Naive thymus-derived CD4-positive, alpha-beta T cell (primary cell): ENCODE measurements at regions of chr18 and their contacts with region 1.

Region 1: DNA sequence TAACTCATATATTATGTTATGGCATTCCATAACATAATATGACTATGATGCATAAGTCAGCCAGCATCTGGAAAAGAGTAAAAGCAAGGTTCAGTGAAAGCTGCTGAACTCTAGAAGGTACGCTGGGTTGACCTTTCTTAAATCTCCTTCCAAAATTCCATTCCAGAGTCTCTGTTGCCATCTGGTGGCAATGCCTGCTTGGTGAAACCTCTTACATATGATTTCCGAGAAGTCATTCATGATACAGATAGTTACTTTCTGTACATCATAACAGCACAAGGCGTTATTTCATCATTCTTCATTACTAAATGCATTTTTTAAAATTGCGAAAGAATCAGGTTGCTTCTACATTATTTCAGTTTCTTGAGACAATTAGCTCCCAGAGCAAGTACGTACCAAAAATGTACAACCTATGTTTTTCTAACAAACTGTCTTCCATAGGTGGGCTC is 7.0 kb upstream of the EPG5 start:
- DNase-seq: peak in 8 of 9 donors; percentile 36 to 68 (median 60)
- ATAC-seq: peak; percentile 94
- H3K4me3 ChIP-seq: no peak overlapping the region
- H3K4me3 Mint-ChIP-seq: peak overlapping the region in 4 of 10 donors; percentile 3 to 35 (median 12)
- H3K27ac ChIP-seq: no peak overlapping the region
- H3K27ac Mint-ChIP-seq: peak overlapping the region in 3 of 9 donors; percentile 13 to 77 (median 56)
- H3K4me1 ChIP-seq: peaks cover 0 to 6% of the 10 kb centered on the region in 2 donors
- H3K4me1 Mint-ChIP-seq: peaks cover 0 to 9% (median 7%) of the 10 kb centered on the region in 7 donors
- H3K27me3 ChIP-seq: no peaks in the 10 kb centered on the region
- H3K27me3 Mint-ChIP-seq: no peaks in the 10 kb centered on the region

Region 2: GRCh38 chr18:45621061-45621511 is 353.0 kb before region 1 on chr18:
- CTCF ChIA-PET with region 1: interaction called, 7 read pairs
- POLR2A ChIA-PET with region 1: no interaction called
- intact Hi-C with region 1: loop called (anchors 1 kb)
- DNase-seq: peak in 8 of 9 donors; percentile 8 to 61 (median 40)
- ATAC-seq: peak; percentile 76
- H3K4me3 ChIP-seq: no peak overlapping the region
- H3K4me3 Mint-ChIP-seq: no peak overlapping the region
- H3K27ac ChIP-seq: no peak overlapping the region
- H3K27ac Mint-ChIP-seq: no peak overlapping the region
- H3K4me1 ChIP-seq: no peaks in the 10 kb centered on the region
- H3K4me1 Mint-ChIP-seq: no peaks in the 10 kb centered on the region
- H3K27me3 ChIP-seq: no peaks in the 10 kb centered on the region
- H3K27me3 Mint-ChIP-seq: peaks cover 0 to 27% (median 10%) of the 10 kb centered on the region in 5 donors

Region 3: GRCh38 chr18:45722899-45723298 is 251.2 kb before region 1 on chr18:
- CTCF ChIA-PET with region 1: no interaction called
- POLR2A ChIA-PET with region 1: no interaction called
- intact Hi-C with region 1: loop called in 1 of 2 experiments (anchors 1 kb)
- DNase-seq: peak in 8 of 9 donors; percentile 7 to 74 (median 40)
- ATAC-seq: peak; percentile 90
- H3K4me3 ChIP-seq: no peak overlapping the region
- H3K4me3 Mint-ChIP-seq: no peak overlapping the region
- H3K27ac ChIP-seq: no peak overlapping the region
- H3K27ac Mint-ChIP-seq: no peak overlapping the region
- H3K4me1 ChIP-seq: no peaks in the 10 kb centered on the region
- H3K4me1 Mint-ChIP-seq: peaks cover 0 to 15% (median 0%) of the 10 kb centered on the region in 7 donors
- H3K27me3 ChIP-seq: no peaks in the 10 kb centered on the region
- H3K27me3 Mint-ChIP-seq: peaks cover 0 to 35% (median 0%) of the 10 kb centered on the region in 5 donors

Region 4: DNA sequence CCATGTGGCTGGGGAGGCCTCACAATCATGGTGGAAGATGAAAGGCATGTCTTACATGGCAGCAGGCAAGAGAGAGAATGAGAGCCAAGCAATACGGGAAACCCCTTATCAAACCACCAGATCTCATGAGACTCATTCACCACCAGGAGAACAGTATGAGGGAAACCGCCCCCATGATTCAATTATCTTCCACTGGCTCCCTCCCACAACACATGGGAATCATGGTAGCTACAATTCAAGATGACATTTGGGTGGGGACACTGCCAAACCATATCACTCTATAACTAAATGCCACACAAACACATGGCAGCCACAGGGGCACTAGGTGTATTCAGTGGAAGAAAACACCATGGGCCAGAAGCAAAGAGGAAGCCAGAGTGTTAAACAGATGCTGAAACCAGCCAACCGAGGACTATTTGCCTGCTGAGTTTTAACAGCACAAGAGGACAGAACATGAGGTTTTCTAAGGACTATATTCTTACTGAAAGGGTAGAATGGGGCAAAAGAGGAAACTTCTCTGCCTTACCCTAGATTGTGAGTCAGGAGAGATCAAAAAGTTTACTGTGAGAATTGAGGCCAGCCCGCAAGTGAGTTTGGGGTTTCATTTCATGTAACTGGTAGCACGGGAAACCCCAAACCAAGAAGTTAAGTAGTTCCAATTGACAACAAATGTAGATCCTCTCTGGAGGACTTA is 99.5 kb before region 1 on chr18:
- CTCF ChIA-PET with region 1: no interaction called
- POLR2A ChIA-PET with region 1: no interaction called
- intact Hi-C with region 1: loop called in 1 of 2 experiments (anchors 2 kb)
- DNase-seq: peak in 7 of 9 donors; percentile 31 to 63 (median 46)
- ATAC-seq: peak; percentile 88
- H3K4me3 ChIP-seq: no peak overlapping the region
- H3K4me3 Mint-ChIP-seq: peak overlapping the region in 9 of 10 donors; percentile 4 to 77 (median 49)
- H3K27ac ChIP-seq: peak overlapping the region; percentile 20
- H3K27ac Mint-ChIP-seq: peak overlapping the region in 8 of 9 donors; percentile 13 to 89 (median 62)
- H3K4me1 ChIP-seq: peaks cover 12 to 14% of the 10 kb centered on the region in 2 donors
- H3K4me1 Mint-ChIP-seq: peaks cover 18 to 30% (median 24%) of the 10 kb centered on the region in 7 donors
- H3K27me3 ChIP-seq: no peaks in the 10 kb centered on the region
- H3K27me3 Mint-ChIP-seq: no peaks in the 10 kb centered on the region

Region 5: DNA sequence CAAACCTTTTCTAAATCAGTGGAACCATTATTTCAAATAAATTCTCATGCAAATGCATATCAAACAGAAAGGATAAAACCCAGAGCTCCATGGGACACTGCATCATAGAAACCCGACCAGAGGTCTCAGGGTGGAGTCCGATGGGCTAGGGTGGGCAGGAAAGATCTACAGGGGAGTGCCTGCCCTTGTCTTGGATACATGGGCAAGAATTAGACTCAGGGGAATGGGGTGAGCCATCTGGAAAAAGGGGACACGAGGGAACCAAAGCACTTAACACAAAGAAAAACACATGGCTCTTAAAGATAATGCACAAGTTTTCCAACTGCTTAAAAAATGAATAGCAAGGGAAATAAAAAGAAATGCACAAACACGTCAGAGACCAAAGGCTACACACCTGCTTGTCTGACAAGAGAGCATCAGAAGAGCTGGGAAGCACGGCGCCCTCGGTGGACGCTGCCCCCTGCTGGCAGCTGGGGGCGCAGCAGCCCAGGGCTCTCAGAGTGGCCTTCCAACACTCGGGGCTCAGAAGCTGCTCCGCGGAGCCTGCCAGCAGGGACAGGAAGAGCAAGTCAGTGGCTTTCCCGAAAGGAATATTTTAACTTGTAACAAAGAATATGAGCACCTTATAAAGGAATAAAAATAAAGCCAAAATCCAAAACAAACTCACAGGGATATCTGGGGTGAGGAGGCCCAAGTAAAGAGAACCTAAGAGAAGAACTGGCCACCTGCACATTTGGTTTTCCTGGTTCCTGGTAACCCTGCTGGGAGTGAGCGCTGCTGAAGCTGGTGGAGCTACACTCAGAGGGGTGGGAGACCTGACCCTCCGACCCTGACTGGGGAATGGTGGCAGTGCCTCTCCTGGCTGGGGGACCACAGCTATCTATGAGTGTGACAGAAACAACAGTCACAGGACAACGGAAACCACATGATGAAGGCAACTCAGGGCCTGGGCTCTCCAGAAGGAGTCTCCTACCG is 94.1 kb before region 1 on chr18:
- CTCF ChIA-PET with region 1: no interaction called
- POLR2A ChIA-PET with region 1: no interaction called
- intact Hi-C with region 1: loop called (anchors 1 to 2 kb)
- DNase-seq: peak; percentile 48 to 80 (median 69)
- ATAC-seq: peak; percentile 98
- H3K4me3 ChIP-seq: no peak overlapping the region
- H3K4me3 Mint-ChIP-seq: peak overlapping the region in 1 of 10 donors; percentile 8
- H3K27ac ChIP-seq: no peak overlapping the region
- H3K27ac Mint-ChIP-seq: peak overlapping the region in 7 of 9 donors; percentile 17 to 67 (median 41)
- H3K4me1 ChIP-seq: peaks cover 0 to 3% of the 10 kb centered on the region in 2 donors
- H3K4me1 Mint-ChIP-seq: peaks cover 9 to 16% (median 16%) of the 10 kb centered on the region in 7 donors
- H3K27me3 ChIP-seq: no peaks in the 10 kb centered on the region
- H3K27me3 Mint-ChIP-seq: no peaks in the 10 kb centered on the region

Region 6: DNA sequence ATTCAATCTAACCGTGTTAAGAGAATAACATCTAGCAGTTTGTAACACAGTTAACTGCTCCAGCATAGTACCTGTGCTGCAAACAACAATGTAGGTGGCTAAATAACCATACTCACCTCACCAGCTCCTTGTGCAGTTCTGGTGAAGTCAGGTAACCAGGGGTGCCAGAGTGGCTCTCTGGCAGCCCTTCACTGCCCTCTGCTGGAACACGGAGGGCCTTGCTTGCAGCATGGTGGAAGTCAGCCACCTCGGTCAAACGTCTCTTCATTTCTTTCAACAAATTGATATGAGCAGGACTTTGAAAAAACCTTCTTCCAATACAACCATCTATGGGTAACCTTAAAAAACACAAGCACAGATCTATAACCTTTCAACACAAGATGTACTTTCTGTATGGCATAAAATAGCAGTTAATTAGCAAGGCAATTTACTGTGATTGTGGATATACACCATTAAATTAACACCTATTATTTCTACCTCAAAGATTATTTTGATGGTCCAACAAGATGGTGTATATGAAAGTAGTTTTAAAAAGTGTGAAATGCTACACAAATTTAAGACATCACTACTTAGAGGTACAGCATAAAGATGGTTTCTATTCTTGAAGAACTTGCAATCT is 63.6 kb before region 1 on chr18:
- CTCF ChIA-PET with region 1: interaction called, 3 read pairs
- POLR2A ChIA-PET with region 1: no interaction called
- intact Hi-C with region 1: loop called in 1 of 2 experiments (anchors 1 kb)
- DNase-seq: peak; percentile 16 to 68 (median 57)
- ATAC-seq: peak; percentile 83
- H3K4me3 ChIP-seq: no peak overlapping the region
- H3K4me3 Mint-ChIP-seq: no peak overlapping the region
- H3K27ac ChIP-seq: no peak overlapping the region
- H3K27ac Mint-ChIP-seq: no peak overlapping the region
- H3K4me1 ChIP-seq: no peaks in the 10 kb centered on the region
- H3K4me1 Mint-ChIP-seq: peaks cover 0 to 5% (median 2%) of the 10 kb centered on the region in 7 donors
- H3K27me3 ChIP-seq: no peaks in the 10 kb centered on the region
- H3K27me3 Mint-ChIP-seq: no peaks in the 10 kb centered on the region

Region 7: GRCh38 chr18:45920367-45920766 is 53.7 kb before region 1 on chr18:
- CTCF ChIA-PET with region 1: no interaction called
- POLR2A ChIA-PET with region 1: no interaction called
- intact Hi-C with region 1: loop called (anchors 1 to 2 kb)
- DNase-seq: no peak
- ATAC-seq: no peak
- H3K4me3 ChIP-seq: no peak overlapping the region
- H3K4me3 Mint-ChIP-seq: no peak overlapping the region
- H3K27ac ChIP-seq: no peak overlapping the region
- H3K27ac Mint-ChIP-seq: peak overlapping the region in 6 of 9 donors; percentile 5 to 52 (median 26)
- H3K4me1 ChIP-seq: peaks cover 6 to 7% of the 10 kb centered on the region in 2 donors
- H3K4me1 Mint-ChIP-seq: peaks cover 2 to 28% (median 20%) of the 10 kb centered on the region in 7 donors
- H3K27me3 ChIP-seq: no peaks in the 10 kb centered on the region
- H3K27me3 Mint-ChIP-seq: no peaks in the 10 kb centered on the region